ENCODE measurements at regions of chr5 and their contacts with region 1.

Region 1: DNA sequence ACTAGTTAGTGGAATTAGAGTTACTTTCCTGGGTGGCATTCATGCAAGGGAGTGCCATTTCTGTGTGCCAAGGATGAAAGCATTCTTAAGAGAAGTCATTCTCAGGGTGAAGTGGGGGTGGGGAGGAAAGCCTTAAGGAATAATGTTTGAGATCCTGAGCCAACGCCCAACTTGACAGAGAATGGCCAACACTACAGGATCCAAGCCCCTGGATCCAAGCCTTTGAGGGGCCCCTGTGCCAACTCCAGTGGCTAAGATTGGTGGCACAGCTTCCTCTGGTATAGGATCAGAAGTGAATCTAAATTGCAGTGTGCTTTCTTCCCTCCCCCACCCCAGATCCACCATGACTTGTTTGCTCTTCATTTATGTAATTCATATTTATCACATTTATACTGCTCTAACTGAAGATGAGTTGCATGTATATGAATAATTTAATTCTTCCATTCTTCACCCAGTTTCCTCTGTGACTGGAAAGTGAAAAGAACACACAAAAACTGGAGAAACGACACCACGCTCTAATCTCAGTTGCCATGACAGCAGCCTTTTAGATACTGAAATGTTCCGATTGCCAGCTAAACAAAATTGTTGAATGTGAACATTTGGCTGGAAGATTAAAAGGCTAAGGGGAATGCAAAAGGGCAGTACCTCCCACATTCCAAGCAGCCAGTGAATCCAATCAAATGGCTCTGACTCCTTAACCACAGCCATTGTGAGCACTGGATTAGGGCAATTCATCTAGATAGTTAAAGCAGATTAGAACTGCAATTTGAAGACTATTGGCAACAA is 4.5 kb downstream of the ZNF608 start:
- DNase-seq: no peak
- ATAC-seq: peak; percentile 66
- H3K4me3 ChIP-seq: peak overlapping the region; percentile 79 to 82
- H3K27ac ChIP-seq: peak overlapping the region; percentile 100
- H3K4me1 ChIP-seq: peaks cover 51% of the 10 kb centered on the region
- H3K27me3 ChIP-seq: no peaks in the 10 kb centered on the region
- CTCF ChIP-seq: no peak

Region 2: DNA sequence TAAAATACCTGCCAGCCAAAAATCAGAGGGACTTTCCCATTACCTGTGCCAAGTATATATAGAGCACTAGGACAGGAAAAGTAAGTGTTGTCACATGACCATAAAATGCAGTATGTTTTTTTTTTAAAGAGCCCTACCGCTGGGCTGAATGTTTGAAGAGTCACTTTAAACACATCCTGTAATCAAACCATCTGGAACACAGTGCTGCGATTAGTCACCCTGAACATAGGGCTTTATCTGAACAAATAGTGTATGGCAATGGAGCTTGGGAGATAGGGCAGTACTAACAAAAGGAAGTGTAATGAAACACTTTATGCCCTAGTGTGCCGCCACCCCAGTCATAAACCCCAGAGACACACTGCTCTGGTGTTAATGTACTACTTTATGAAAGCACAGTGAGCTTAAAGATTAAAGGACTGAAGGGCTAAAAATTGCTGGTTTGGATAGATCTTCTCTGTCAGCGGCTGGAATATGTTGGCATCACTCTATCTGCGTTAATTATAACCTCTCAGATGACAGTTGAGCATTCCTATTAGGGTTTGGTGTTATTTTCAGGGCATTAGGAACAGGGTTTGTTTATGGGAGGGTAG is 85.9 kb before region 1 on chr5:
- CTCF ChIA-PET with region 1: no interaction called
- POLR2A ChIA-PET with region 1: interaction called, 4 read pairs
- in situ Hi-C with region 1: no loop called
- intact Hi-C with region 1: loop called (anchors 5 kb)
- DNase-seq: peak; percentile 80
- ATAC-seq: peak; percentile 85
- H3K4me3 ChIP-seq: peak overlapping the region in 1 of 2 experiments; percentile 39; a peak in 2 of 4 replicates
- H3K27ac ChIP-seq: peak overlapping the region; percentile 100
- H3K4me1 ChIP-seq: peaks cover 95% of the 10 kb centered on the region
- H3K27me3 ChIP-seq: no peaks in the 10 kb centered on the region
- CTCF ChIP-seq: no peak

Region 3: DNA sequence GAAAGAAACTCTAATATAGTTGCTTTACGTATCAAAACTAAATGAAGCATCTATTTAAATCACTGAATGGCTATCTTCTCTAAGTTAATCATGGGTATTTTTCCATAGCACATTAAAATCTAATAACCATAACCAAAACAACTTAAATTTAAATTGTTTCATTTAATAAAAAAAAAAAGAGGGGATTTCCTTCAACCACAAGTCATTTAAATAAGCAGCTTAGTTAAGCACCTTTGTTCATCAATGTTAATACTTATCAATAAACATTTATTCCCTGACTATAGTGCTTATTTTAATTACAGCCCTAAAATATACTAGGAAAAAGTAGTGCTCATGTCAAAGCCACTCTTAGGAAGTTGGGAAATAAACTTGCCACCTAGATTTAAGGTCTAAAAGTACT is 25.7 kb before region 1 on chr5:
- CTCF ChIA-PET with region 1: no interaction called
- POLR2A ChIA-PET with region 1: interaction called, 16 read pairs
- in situ Hi-C with region 1: no loop called
- intact Hi-C with region 1: no loop called
- DNase-seq: no peak
- ATAC-seq: no peak
- H3K4me3 ChIP-seq: no peak overlapping the region
- H3K27ac ChIP-seq: no peak overlapping the region
- H3K4me1 ChIP-seq: peaks cover 50% of the 10 kb centered on the region
- H3K27me3 ChIP-seq: no peaks in the 10 kb centered on the region
- CTCF ChIP-seq: no peak